ENCODE measurements at regions of chr13 and their contacts with region 1.

Region 1: DNA sequence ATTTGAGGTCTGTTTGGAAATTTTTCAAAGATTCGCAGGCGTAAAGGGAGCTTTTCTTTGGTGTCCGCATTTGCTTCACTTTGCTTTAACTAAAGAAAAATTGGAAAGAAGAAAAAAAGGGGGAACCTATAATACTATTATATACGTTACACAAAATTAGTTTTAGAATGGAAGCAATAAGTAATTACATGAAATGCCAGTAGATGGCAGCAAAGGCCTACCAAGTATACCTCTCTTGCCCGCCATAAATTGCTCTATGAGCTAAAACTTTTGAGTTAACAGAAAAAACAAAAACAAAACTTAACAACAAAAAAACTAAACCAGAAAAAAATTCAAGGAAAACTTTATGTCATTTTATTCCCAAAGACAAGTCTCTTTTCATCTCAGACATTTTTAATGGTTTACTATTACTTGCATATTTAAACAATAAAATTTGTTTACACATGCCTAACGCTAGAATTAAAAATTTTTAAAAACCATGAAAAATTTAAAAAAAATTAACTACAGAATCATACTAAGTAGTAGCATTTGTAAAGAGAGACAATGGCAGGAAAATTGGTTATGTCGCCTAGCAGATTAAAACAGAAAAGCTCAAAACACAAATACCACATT is 271.4 kb downstream of the NALCN start:
- DNase-seq: peak in 1 of 2 donors; percentile 74
- ATAC-seq: peak in 2 of 3 donors; percentile 40 to 65
- H3K4me3 ChIP-seq: no peak overlapping the region
- H3K4me3 Mint-ChIP-seq: no peak overlapping the region
- H3K27ac ChIP-seq: no peak overlapping the region
- H3K27ac Mint-ChIP-seq: no peak overlapping the region
- H3K4me1 ChIP-seq: no peaks in the 10 kb centered on the region
- H3K4me1 Mint-ChIP-seq: no peaks in the 10 kb centered on the region
- H3K27me3 ChIP-seq: peaks cover 7% of the 10 kb centered on the region
- H3K27me3 Mint-ChIP-seq: peaks cover 12 to 29% of the 10 kb centered on the region in 2 donors
- CTCF ChIP-seq: peak; percentile 80

Region 2: DNA sequence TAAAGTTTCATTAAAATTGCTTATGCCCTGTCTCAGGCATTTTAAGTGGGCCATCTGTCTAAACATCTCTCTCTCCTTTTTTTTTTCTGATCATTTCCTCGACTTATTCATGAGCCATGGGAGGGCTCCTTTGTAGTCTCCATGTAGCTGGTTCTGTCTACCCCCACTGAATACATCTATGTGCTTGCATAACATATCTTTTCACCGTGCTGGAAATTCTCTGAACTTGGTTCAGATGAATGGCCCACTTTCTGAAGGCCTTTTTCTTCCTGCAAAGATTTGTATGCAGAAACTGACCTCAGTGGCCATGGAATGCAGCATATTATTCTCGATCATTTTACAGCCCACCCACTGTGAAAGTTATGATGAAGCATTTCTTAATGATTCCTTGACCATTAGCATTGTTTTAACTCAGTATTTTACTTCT is 781.6 kb before region 1 on chr13:
- intact Hi-C with region 1: no loop called
- DNase-seq: no peak
- ATAC-seq: no peak
- H3K4me3 ChIP-seq: no peak overlapping the region
- H3K4me3 Mint-ChIP-seq: no peak overlapping the region
- H3K27ac ChIP-seq: no peak overlapping the region
- H3K27ac Mint-ChIP-seq: no peak overlapping the region
- H3K4me1 ChIP-seq: no peaks in the 10 kb centered on the region
- H3K4me1 Mint-ChIP-seq: no peaks in the 10 kb centered on the region
- H3K27me3 ChIP-seq: no peaks in the 10 kb centered on the region
- H3K27me3 Mint-ChIP-seq: no peaks in the 10 kb centered on the region
- CTCF ChIP-seq: no peak

Region 3: DNA sequence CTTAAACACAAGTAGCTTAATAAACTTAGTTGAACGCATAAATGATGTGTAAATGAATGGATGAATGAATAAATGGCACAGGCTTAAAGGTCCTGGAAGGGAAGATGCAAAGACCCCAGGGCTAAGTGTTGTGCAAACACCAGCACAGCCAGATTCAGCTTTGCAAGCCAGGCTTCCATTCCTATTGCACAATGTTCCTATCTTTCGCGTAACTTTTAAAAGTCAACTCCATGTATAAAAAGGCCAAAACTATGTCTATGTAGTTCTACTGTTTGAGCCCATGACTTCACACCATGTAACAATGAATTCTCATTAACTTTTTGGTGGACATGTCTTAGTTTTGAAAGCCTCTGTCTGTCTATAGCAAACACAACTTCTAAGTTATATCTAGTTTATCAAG is 45.4 kb after region 1 on chr13:
- intact Hi-C with region 1: no loop called
- DNase-seq: no peak
- ATAC-seq: no peak
- H3K4me3 ChIP-seq: no peak overlapping the region
- H3K4me3 Mint-ChIP-seq: no peak overlapping the region
- H3K27ac ChIP-seq: no peak overlapping the region
- H3K27ac Mint-ChIP-seq: no peak overlapping the region
- H3K4me1 ChIP-seq: no peaks in the 10 kb centered on the region
- H3K4me1 Mint-ChIP-seq: no peaks in the 10 kb centered on the region
- H3K27me3 ChIP-seq: no peaks in the 10 kb centered on the region
- H3K27me3 Mint-ChIP-seq: no peaks in the 10 kb centered on the region
- CTCF ChIP-seq: no peak

Region 4: GRCh38 chr13:101307181-101307701 is 162.3 kb after region 1 on chr13:
- intact Hi-C with region 1: no loop called
- DNase-seq: no peak
- ATAC-seq: no peak
- H3K4me3 ChIP-seq: no peak overlapping the region
- H3K4me3 Mint-ChIP-seq: no peak overlapping the region
- H3K27ac ChIP-seq: no peak overlapping the region
- H3K27ac Mint-ChIP-seq: no peak overlapping the region
- H3K4me1 ChIP-seq: no peaks in the 10 kb centered on the region
- H3K4me1 Mint-ChIP-seq: no peaks in the 10 kb centered on the region
- H3K27me3 ChIP-seq: no peaks in the 10 kb centered on the region
- H3K27me3 Mint-ChIP-seq: no peaks in the 10 kb centered on the region
- CTCF ChIP-seq: no peak

Region 5: GRCh38 chr13:101757446-101758039 is 612.6 kb after region 1 on chr13:
- intact Hi-C with region 1: loop called (anchors 5 kb)
- DNase-seq: peak in 1 of 2 donors; percentile 55
- ATAC-seq: peak in 1 of 3 donors; percentile 44
- H3K4me3 ChIP-seq: no peak overlapping the region
- H3K4me3 Mint-ChIP-seq: no peak overlapping the region
- H3K27ac ChIP-seq: no peak overlapping the region
- H3K27ac Mint-ChIP-seq: no peak overlapping the region
- H3K4me1 ChIP-seq: no peaks in the 10 kb centered on the region
- H3K4me1 Mint-ChIP-seq: no peaks in the 10 kb centered on the region
- H3K27me3 ChIP-seq: no peaks in the 10 kb centered on the region
- H3K27me3 Mint-ChIP-seq: peaks cover 0 to 4% of the 10 kb centered on the region in 2 donors
- CTCF ChIP-seq: no peak

Region 6: GRCh38 chr13:102452831-102453230 is 1307.9 kb after region 1 on chr13:
- intact Hi-C with region 1: loop called (anchors 10 kb)
- DNase-seq: no peak
- ATAC-seq: no peak
- H3K4me3 ChIP-seq: no peak overlapping the region
- H3K4me3 Mint-ChIP-seq: no peak overlapping the region
- H3K27ac ChIP-seq: no peak overlapping the region
- H3K27ac Mint-ChIP-seq: no peak overlapping the region
- H3K4me1 ChIP-seq: no peaks in the 10 kb centered on the region
- H3K4me1 Mint-ChIP-seq: peaks cover 0 to 7% of the 10 kb centered on the region in 2 donors
- H3K27me3 ChIP-seq: no peaks in the 10 kb centered on the region
- H3K27me3 Mint-ChIP-seq: peaks cover 0 to 3% of the 10 kb centered on the region in 2 donors
- CTCF ChIP-seq: no peak

Region 7: GRCh38 chr13:102555917-102556553 is 1411.1 kb after region 1 on chr13:
- intact Hi-C with region 1: loop called (anchors 5 kb)
- DNase-seq: peak in 1 of 2 donors; percentile 54
- ATAC-seq: peak in 1 of 3 donors; percentile 47
- H3K4me3 ChIP-seq: no peak overlapping the region
- H3K4me3 Mint-ChIP-seq: no peak overlapping the region
- H3K27ac ChIP-seq: no peak overlapping the region
- H3K27ac Mint-ChIP-seq: no peak overlapping the region
- H3K4me1 ChIP-seq: no peaks in the 10 kb centered on the region
- H3K4me1 Mint-ChIP-seq: peaks cover 0 to 6% of the 10 kb centered on the region in 2 donors
- H3K27me3 ChIP-seq: no peaks in the 10 kb centered on the region
- H3K27me3 Mint-ChIP-seq: peaks cover 6 to 12% of the 10 kb centered on the region in 2 donors
- CTCF ChIP-seq: peak; percentile 41